Naive thymus-derived CD4-positive, alpha-beta T cell (primary cell): ENCODE measurements at regions of chr2 and their contacts with region 1.

Region 1: DNA sequence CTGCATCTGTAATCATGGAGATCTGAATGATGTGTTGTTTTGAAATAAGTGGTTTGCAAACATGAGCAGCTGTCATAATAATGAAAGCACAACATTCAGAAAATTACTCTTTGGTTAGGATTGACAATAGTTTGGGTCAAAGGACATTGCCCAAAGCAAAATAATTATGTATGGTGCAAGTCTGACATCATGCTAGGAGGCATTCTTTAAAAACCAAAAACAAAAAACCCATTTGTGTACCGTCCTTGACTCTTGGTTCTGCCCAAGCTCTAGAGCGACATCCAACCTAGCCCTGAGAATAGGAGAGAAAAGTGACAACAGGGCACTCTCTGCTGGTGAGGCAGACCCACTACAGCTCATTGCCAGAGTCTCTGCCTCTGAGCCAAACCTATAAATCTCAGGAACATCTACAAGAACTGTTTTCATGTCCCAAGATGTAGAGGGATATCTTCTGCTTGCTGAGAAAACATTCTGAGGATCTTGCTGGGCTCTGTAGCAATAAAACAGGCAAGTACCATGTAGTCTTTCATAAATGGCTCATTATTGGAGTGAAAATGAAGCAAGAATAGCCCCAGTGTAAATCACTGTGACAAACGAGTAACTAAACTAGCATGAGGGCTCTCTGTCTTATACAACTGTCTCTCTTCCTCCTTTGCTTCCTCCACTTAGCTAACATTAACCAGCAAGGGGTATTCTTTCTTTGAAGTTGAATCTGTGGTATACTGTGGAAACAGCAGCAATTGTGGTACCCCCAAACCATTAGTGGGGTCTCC is 266.8 kb upstream of the CXCR4 start:
- DNase-seq: peak in 7 of 9 donors; percentile 63 to 79 (median 69)
- ATAC-seq: peak; percentile 78
- H3K4me3 ChIP-seq: no peak overlapping the region
- H3K4me3 Mint-ChIP-seq: peak overlapping the region in 6 of 10 donors; percentile 4 to 73 (median 30)
- H3K27ac ChIP-seq: no peak overlapping the region
- H3K27ac Mint-ChIP-seq: peak overlapping the region; percentile 37 to 98 (median 92)
- H3K4me1 ChIP-seq: peaks cover 22 to 25% of the 10 kb centered on the region in 2 donors
- H3K4me1 Mint-ChIP-seq: peaks cover 21 to 46% (median 40%) of the 10 kb centered on the region in 7 donors
- H3K27me3 ChIP-seq: no peaks in the 10 kb centered on the region
- H3K27me3 Mint-ChIP-seq: no peaks in the 10 kb centered on the region

Region 2: DNA sequence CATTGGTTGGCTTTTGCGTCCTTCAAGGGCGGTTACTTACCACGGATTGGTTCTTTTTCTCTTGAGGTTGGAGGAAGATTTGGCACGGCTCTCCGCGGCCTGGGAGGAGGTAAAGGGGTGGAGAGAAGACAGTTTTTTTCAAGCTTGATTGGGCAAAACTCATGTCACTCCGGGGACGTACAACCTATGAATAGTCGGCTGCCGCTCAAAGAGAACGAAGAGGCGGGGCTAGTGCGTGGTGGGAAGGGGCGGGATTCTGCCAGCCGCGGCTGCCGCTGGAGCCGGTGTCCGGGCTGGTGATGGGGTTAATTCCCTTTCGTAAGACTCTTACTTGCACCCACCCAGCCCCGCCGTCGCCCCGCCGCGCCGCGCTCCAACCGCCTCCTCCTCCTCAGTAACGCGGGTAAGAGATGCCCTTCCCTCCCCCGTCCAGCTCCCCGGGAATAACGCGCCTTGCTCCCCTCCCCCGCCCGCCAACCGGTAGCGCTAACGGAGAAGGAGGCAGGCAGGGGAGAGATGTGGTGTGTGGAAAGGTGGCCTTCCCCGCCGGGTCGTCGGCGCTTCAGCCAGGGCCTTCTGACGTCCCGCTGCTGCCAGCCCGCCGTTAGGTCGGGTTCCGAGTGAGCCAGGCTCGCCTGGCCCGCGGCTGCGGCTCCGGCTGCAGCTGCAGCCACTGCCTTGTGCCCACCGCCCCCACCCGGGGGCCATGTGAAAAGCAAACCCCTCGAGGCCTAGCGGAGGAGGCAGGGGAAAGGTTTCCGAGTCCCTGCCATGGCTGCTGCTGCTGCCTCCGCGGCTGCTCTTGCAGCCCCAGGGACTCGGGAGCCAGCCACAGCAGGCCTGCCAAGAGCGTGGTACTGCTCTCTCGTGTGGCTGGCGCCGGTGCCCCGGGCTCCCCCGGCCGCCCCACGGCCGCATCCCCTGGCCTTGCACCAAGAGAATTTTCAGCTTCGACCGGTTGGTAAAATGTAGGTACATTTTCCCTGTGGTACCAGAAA is 853.2 kb before region 1 on chr2 and contains the start of gene R3HDM1:
- CTCF ChIA-PET with region 1: no interaction called
- POLR2A ChIA-PET with region 1: interaction called, 3 read pairs
- intact Hi-C with region 1: loop called (anchors 1 to 5 kb)
- DNase-seq: peak in 8 of 9 donors; percentile 71 to 99 (median 98)
- ATAC-seq: peak; percentile 89
- H3K4me3 ChIP-seq: peak within 1 kb of the TSS; percentile 83
- H3K4me3 Mint-ChIP-seq: no peak within 1 kb of the TSS
- H3K27ac ChIP-seq: peak within 1 kb of the TSS; percentile 84
- H3K27ac Mint-ChIP-seq: peak within 1 kb of the TSS in 7 of 9 donors; percentile 36 to 81 (median 67)
- H3K4me1 ChIP-seq: peaks cover 4 to 21% of the 10 kb centered on the region in 2 donors
- H3K4me1 Mint-ChIP-seq: peaks cover 10 to 39% (median 34%) of the 10 kb centered on the region in 7 donors
- H3K27me3 ChIP-seq: no peaks in the 10 kb centered on the region
- H3K27me3 Mint-ChIP-seq: no peaks in the 10 kb centered on the region
- total RNA-seq, gene R3HDM1: 35.0 to 58.2 (median 47.0) TPM

Region 3: DNA sequence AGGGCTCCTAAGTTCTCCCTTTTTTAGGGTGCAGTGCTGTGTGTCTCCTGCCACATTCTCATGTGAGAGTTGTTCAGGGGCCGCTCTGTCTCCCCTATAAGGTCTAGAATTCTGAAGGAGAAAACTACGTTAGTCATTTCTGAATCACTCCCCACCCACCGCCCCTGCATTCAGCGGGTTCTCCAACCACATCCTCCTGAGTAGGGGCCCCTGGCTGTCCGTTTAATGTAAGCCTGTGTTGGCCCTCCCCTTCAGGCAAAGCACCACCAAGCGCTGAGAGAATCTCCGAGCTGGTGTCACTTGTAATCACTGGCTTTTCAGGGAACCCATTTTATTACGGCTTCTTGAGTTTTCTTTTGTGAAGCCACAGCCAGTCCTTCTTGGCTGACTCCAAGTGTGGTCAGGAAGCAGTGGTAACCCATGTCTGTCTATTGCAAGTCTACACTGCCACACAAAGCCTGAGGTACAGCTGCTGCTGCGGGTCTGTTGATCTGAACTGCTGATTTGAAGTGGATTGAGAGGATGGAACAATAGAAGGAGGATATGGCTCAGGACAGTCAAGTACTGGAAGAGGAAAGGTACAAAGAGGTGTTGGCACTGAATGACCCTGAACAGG is 564.6 kb before region 1 on chr2:
- CTCF ChIA-PET with region 1: interaction called, 4 read pairs
- POLR2A ChIA-PET with region 1: no interaction called
- intact Hi-C with region 1: loop called (anchors 1 kb)
- DNase-seq: peak in 8 of 9 donors; percentile 17 to 84 (median 42)
- ATAC-seq: peak; percentile 79
- H3K4me3 ChIP-seq: peak overlapping the region; percentile 13
- H3K4me3 Mint-ChIP-seq: peak overlapping the region; percentile 20 to 79 (median 58)
- H3K27ac ChIP-seq: no peak overlapping the region
- H3K27ac Mint-ChIP-seq: peak overlapping the region in 7 of 9 donors; percentile 9 to 81 (median 47)
- H3K4me1 ChIP-seq: peaks cover 10 to 11% of the 10 kb centered on the region in 2 donors
- H3K4me1 Mint-ChIP-seq: peaks cover 7 to 43% (median 24%) of the 10 kb centered on the region in 7 donors
- H3K27me3 ChIP-seq: no peaks in the 10 kb centered on the region
- H3K27me3 Mint-ChIP-seq: no peaks in the 10 kb centered on the region

Region 4: GRCh38 chr2:135960656-135961551 is 423.8 kb before region 1 on chr2:
- CTCF ChIA-PET with region 1: interaction called, 6 read pairs
- POLR2A ChIA-PET with region 1: no interaction called
- intact Hi-C with region 1: loop called in 1 of 2 experiments (anchors 5 kb)
- DNase-seq: peak in 6 of 9 donors; percentile 3 to 44 (median 26)
- ATAC-seq: peak; percentile 76
- H3K4me3 ChIP-seq: no peak overlapping the region
- H3K4me3 Mint-ChIP-seq: peak overlapping the region in 9 of 10 donors; percentile 3 to 79 (median 37)
- H3K27ac ChIP-seq: peak overlapping the region; percentile 40
- H3K27ac Mint-ChIP-seq: peak overlapping the region; percentile 51 to 93 (median 83)
- H3K4me1 ChIP-seq: peaks cover 18 to 26% of the 10 kb centered on the region in 2 donors
- H3K4me1 Mint-ChIP-seq: peaks cover 37 to 67% (median 60%) of the 10 kb centered on the region in 7 donors
- H3K27me3 ChIP-seq: no peaks in the 10 kb centered on the region
- H3K27me3 Mint-ChIP-seq: no peaks in the 10 kb centered on the region

Region 5: GRCh38 chr2:136238286-136239078 is 146.2 kb before region 1 on chr2:
- CTCF ChIA-PET with region 1: interaction called, 5 read pairs
- POLR2A ChIA-PET with region 1: interaction called, 7 read pairs
- intact Hi-C with region 1: loop called (anchors 2 to 5 kb)
- DNase-seq: peak in 8 of 9 donors; percentile 33 to 75 (median 60)
- ATAC-seq: peak; percentile 84
- H3K4me3 ChIP-seq: no peak overlapping the region
- H3K4me3 Mint-ChIP-seq: peak overlapping the region; percentile 26 to 64 (median 48)
- H3K27ac ChIP-seq: peak overlapping the region; percentile 25
- H3K27ac Mint-ChIP-seq: peak overlapping the region; percentile 84 to 95 (median 90)
- H3K4me1 ChIP-seq: peaks cover 31 to 36% of the 10 kb centered on the region in 2 donors
- H3K4me1 Mint-ChIP-seq: peaks cover 32 to 60% (median 54%) of the 10 kb centered on the region in 7 donors
- H3K27me3 ChIP-seq: no peaks in the 10 kb centered on the region
- H3K27me3 Mint-ChIP-seq: no peaks in the 10 kb centered on the region

Region 6: GRCh38 chr2:136482966-136483365 is 98.2 kb after region 1 on chr2:
- CTCF ChIA-PET with region 1: no interaction called
- POLR2A ChIA-PET with region 1: no interaction called
- intact Hi-C with region 1: no loop called
- DNase-seq: no peak
- ATAC-seq: no peak
- H3K4me3 ChIP-seq: no peak overlapping the region
- H3K4me3 Mint-ChIP-seq: no peak overlapping the region
- H3K27ac ChIP-seq: no peak overlapping the region
- H3K27ac Mint-ChIP-seq: no peak overlapping the region
- H3K4me1 ChIP-seq: no peaks in the 10 kb centered on the region
- H3K4me1 Mint-ChIP-seq: no peaks in the 10 kb centered on the region
- H3K27me3 ChIP-seq: no peaks in the 10 kb centered on the region
- H3K27me3 Mint-ChIP-seq: peaks cover 0 to 9% (median 4%) of the 10 kb centered on the region in 5 donors

Region 7: GRCh38 chr2:137155356-137156104 is 770.8 kb after region 1 on chr2:
- CTCF ChIA-PET with region 1: no interaction called
- POLR2A ChIA-PET with region 1: no interaction called
- intact Hi-C with region 1: no loop called
- DNase-seq: no peak
- ATAC-seq: no peak
- H3K4me3 ChIP-seq: no peak overlapping the region
- H3K4me3 Mint-ChIP-seq: no peak overlapping the region
- H3K27ac ChIP-seq: no peak overlapping the region
- H3K27ac Mint-ChIP-seq: no peak overlapping the region
- H3K4me1 ChIP-seq: no peaks in the 10 kb centered on the region
- H3K4me1 Mint-ChIP-seq: no peaks in the 10 kb centered on the region
- H3K27me3 ChIP-seq: no peaks in the 10 kb centered on the region
- H3K27me3 Mint-ChIP-seq: no peaks in the 10 kb centered on the region

Region 8: DNA sequence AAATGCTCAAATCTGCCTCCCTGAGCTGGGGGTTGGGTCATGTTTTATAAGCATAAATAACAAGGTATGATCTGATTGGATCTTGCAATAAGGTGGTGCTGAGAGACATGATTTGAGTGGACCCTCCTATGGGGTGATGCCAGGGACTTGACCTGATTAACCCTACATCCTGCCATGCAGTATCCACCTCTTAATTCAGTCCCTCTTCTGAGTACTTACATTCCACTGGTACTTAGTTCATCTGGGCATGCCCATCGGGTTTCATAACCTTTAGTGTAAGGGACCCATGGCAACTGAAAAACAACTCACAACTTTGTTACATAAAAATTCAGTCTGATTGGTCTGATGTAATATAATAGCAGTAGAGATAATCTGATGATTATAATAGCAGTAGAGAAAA is 1181.7 kb after region 1 on chr2:
- CTCF ChIA-PET with region 1: no interaction called
- POLR2A ChIA-PET with region 1: no interaction called
- intact Hi-C with region 1: no loop called
- DNase-seq: no peak
- ATAC-seq: no peak
- H3K4me3 ChIP-seq: no peak overlapping the region
- H3K4me3 Mint-ChIP-seq: no peak overlapping the region
- H3K27ac ChIP-seq: no peak overlapping the region
- H3K27ac Mint-ChIP-seq: no peak overlapping the region
- H3K4me1 ChIP-seq: no peaks in the 10 kb centered on the region
- H3K4me1 Mint-ChIP-seq: no peaks in the 10 kb centered on the region
- H3K27me3 ChIP-seq: no peaks in the 10 kb centered on the region
- H3K27me3 Mint-ChIP-seq: no peaks in the 10 kb centered on the region